Upper lobe of right lung (tissue), 1 donor: ENCODE measurements at regions of chr13 and their contacts with region 1.

Region 1: GRCh38 chr13:98653463-98653985 is 76.6 kb upstream of the STK24 start:
- DNase-seq: peak; percentile 76
- ATAC-seq: peak; percentile 94
- H3K4me3 ChIP-seq: no peak overlapping the region
- H3K27ac ChIP-seq: no peak overlapping the region
- H3K4me1 ChIP-seq: no peaks in the 10 kb centered on the region
- H3K27me3 ChIP-seq: no peaks in the 10 kb centered on the region
- CTCF ChIP-seq: peak; percentile 93

Region 2: GRCh38 chr13:98443329-98443728 is 210.2 kb before region 1 on chr13:
- intact Hi-C with region 1: loop called (anchors 5 kb)
- DNase-seq: no peak
- ATAC-seq: no peak
- H3K4me3 ChIP-seq: no peak overlapping the region
- H3K27ac ChIP-seq: no peak overlapping the region
- H3K4me1 ChIP-seq: peaks cover 5% of the 10 kb centered on the region
- H3K27me3 ChIP-seq: no peaks in the 10 kb centered on the region
- CTCF ChIP-seq: no peak

Region 3: DNA sequence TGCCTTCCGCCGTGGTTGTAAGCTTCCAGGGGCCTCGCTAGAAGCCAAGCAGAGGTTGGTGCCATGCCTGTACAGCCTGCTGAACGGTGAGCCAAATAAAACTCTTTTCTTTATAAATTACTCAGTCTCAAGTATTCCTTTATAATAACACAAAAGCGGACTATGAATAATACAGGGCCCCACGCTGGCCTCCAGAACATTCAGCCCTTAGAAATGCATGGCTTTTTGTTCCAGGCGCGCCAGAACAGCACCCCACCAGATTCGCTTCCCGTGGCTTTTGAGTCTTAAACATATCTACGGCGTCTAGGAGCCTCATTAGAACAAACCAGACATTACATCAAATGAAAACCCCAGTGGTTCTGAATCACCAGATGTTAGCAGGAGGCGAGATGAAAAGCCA is 23.9 kb after region 1 on chr13:
- intact Hi-C with region 1: no loop called
- DNase-seq: no peak
- ATAC-seq: no peak
- H3K4me3 ChIP-seq: no peak overlapping the region
- H3K27ac ChIP-seq: no peak overlapping the region
- H3K4me1 ChIP-seq: peaks cover 8% of the 10 kb centered on the region
- H3K27me3 ChIP-seq: no peaks in the 10 kb centered on the region
- CTCF ChIP-seq: no peak

Region 4: DNA sequence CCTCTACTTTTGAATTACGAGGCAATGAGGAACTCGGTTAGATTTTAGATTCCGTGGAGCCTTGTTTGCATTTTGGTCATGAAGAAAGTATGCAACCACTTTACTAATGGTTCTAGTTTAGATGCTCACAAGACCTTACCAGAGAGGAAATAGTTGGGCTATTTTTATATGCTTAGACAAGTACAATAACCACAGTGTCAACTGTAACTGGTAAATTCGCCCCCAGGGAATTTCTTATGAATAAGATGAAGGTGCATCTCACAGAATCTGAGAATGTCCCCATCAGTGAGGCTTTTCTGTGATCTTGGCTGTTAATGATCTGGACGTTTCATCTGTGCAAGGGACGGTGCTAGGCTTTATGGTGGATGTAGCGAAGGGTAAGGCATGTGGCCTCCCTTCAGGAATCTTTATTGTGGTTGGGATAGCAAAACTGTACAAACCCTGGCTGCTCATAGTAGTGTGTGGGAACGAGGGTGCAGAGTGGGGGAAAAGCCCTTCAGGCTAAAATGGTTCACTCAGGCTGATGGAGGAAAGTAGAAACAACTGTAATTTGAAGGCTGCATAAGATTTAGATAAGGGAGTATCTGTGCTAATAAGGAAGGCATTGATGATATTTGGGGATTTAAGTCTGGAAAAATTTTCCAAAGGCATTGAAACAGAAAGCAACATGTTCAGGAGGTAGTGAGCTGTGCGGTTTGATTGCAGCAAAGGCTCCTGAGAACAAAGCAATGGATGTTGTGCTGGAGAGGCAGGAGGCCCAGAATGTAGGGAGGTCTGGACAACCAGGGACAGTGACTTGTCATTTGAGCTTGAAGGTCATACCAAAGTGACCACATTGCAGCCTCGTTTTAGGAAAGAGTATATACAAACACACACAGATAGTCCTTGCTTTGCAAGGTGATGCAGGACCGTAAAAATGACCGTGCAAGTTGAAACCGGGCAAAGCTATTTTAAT is 575.5 kb after region 1 on chr13:
- intact Hi-C with region 1: no loop called
- DNase-seq: no peak
- ATAC-seq: no peak
- H3K4me3 ChIP-seq: no peak overlapping the region
- H3K27ac ChIP-seq: no peak overlapping the region
- H3K4me1 ChIP-seq: peaks cover 23% of the 10 kb centered on the region
- H3K27me3 ChIP-seq: no peaks in the 10 kb centered on the region
- CTCF ChIP-seq: no peak